Aorta (tissue), 5 donors: ENCODE measurements at regions of chr2 and their contacts with region 1.

Region 1: DNA sequence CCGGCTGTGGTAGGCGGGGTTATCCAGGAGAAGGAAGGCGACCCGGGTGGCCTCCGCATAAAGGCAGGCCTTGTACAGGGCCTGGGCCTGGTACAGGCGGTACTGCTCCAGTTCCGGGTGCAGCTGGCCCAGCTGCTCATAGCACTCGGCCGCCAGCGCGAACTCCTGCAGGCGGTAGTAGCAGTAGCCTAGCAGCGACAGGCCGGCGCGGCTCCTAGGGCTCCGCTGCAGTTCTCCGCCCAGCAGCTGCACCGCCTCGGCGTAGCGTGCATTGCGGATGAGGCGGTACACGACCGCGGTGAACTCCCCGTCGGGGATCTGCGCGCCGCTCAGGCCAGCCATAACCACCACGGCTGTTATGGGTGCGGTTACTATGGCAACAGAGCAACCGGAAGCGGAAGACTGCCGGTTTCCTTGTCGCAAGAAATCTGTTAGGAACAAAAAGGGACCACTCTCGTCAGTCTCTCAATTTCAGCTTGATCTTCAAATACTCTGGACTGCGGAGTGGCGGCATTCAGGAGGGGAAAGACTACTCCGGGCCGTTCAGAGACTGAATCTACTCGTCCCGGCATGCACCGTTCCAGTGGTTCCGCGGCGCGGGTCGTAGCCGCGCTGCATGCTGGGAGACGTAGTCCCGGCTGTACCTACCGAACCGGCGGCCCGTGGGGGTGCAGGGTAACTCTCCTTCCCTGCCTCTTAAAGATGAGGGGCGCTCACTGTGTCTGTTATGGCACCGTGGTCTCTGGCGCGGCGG is 160.0 kb downstream of the AGPS start:
- DNase-seq: peak; percentile 92 to 95
- ATAC-seq: peak; percentile 98
- H3K4me3 ChIP-seq: peak overlapping the region; percentile 73 to 86
- H3K27ac ChIP-seq: peak overlapping the region; percentile 31 to 92
- H3K4me1 ChIP-seq: no peaks in the 10 kb centered on the region
- H3K27me3 ChIP-seq: no peaks in the 10 kb centered on the region

Region 2: GRCh38 chr2:177618255-177619253 is 66.0 kb after region 1 on chr2:
- intact Hi-C with region 1: loop called (anchors 5 kb)
- DNase-seq: peak; percentile 96 to 97
- ATAC-seq: peak; percentile 98
- H3K4me3 ChIP-seq: peak overlapping the region; percentile 50 to 66
- H3K27ac ChIP-seq: peak overlapping the region in 1 of 2 donors; percentile 85
- H3K4me1 ChIP-seq: no peaks in the 10 kb centered on the region
- H3K27me3 ChIP-seq: no peaks in the 10 kb centered on the region

Region 3: DNA sequence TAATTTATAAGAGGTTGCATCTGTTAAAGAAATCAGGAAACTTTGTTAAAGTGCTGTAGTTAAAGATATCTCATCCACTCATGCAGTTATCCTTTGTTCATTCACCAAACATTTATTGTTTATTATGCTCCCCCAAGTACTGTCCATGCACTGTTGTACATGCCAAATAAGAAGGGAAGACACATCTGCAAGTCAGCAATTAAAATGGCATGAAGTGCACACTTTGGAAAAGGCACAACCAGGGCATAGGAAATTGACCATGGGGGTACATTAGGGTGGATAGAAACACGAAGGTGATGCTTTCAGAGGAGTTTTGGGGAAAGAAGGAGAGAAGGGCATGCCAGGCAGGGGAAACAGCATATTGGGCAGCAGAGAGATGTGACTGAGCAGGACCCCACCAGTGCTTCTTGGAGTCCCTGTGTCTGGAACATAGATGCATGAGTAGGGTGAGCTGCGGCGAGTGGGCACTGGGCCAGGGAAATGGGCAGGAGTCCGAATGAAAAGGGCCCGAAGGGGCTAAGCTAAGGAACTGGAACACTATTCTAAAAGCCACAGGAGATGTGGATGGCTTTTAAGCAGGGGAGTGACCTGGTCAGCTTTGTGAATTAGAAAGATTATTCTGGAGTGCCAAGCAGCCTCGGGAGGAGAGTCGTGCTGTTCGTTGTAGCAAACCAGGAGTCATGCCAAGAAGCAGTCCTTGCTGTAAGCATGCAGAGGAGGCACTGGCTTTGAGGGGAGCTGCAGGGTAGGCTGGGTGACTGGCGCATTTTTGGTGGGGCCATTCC is 156.3 kb after region 1 on chr2:
- intact Hi-C with region 1: no loop called
- DNase-seq: no peak
- ATAC-seq: no peak
- H3K4me3 ChIP-seq: no peak overlapping the region
- H3K27ac ChIP-seq: no peak overlapping the region
- H3K4me1 ChIP-seq: no peaks in the 10 kb centered on the region
- H3K27me3 ChIP-seq: no peaks in the 10 kb centered on the region